Heart right ventricle (tissue), 16 donors: ENCODE measurements at regions of chr16 and their contacts with region 1.

Region 1: GRCh38 chr16:89507834-89508590 is at the start of gene SPG7:
- DNase-seq: peak; percentile 84 to 90
- ATAC-seq: peak; percentile 86 to 95 (median 91)
- H3K4me3 ChIP-seq: peak within 1 kb of the TSS; percentile 51 to 97 (median 88)
- H3K27ac ChIP-seq: peak within 1 kb of the TSS; percentile 91 to 99 (median 98)
- H3K4me1 ChIP-seq: peaks cover 20 to 53% (median 45%) of the 10 kb centered on the region in 9 donors
- H3K27me3 ChIP-seq: no peaks in the 10 kb centered on the region
- CTCF ChIP-seq: peak in 2 of 9 donors; percentile 16
- total RNA-seq, gene SPG7: 85.4 to 145 (median 101) TPM

Region 2: GRCh38 chr16:89330177-89330856 is 177.7 kb before region 1 on chr16:
- intact Hi-C with region 1: loop called in 9 of 10 experiments (anchors 1 to 10 kb)
- DNase-seq: no peak
- ATAC-seq: peak in 6 of 8 donors; percentile 20 to 50 (median 34)
- H3K4me3 ChIP-seq: peak overlapping the region in 4 of 10 donors; percentile 7 to 18 (median 10)
- H3K27ac ChIP-seq: peak overlapping the region in 9 of 10 donors; percentile 13 to 78 (median 42)
- H3K4me1 ChIP-seq: peaks cover 32 to 93% (median 71%) of the 10 kb centered on the region in 9 donors
- H3K27me3 ChIP-seq: no peaks in the 10 kb centered on the region
- CTCF ChIP-seq: no peak

Region 3: DNA sequence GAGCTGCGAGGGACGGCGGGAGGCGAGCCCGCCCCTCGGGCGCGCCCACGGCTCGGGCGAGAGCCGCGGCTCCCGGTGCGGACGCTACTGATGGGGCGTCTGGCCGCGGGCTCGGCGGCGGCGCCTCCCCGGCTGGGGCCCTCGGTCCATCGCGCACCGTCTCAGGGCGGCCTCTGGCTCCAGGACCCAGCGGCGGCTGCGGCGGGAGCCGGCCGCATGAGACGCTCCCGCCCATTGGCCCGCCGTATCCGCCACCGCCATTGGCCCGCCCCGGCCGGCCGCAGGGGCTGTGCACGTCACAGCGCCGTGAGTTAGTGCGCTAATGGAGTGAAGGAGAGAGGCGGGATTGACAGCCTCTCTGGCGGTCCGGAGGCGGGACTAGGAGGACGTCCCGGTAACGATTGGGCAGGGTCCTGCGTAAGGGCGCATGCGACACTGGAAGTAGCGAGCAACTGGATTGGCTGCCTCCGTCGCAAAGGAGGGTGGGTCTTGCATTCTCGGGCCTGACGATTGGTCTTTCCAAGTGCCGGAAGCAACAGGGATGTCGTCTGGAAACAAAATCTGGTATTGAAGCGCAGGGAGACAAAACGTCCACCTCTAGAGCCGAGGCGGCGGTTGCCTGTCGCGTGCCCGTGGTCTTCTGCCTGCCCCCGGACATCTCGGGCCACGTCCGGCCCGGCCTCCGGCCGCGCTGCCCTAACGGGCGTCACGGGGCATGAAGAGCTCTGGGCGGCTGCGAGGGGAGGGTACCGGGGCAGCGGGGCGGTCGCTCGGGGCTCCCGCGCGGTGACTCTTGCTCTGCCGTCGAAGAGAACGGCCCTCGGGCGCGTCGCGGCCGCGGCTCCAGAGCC is 17.4 kb before region 1 on chr16 and contains the start of gene ANKRD11:
- intact Hi-C with region 1: loop called in 1 of 10 experiments (anchors 1 kb)
- DNase-seq: peak; percentile 98 to 99
- ATAC-seq: peak; percentile 97 to 99 (median 98)
- H3K4me3 ChIP-seq: peak within 1 kb of the TSS; percentile 72 to 98 (median 86)
- H3K27ac ChIP-seq: peak within 1 kb of the TSS; percentile 93 to 98 (median 94)
- H3K4me1 ChIP-seq: peaks cover 18 to 62% (median 47%) of the 10 kb centered on the region in 9 donors
- H3K27me3 ChIP-seq: no peaks in the 10 kb centered on the region
- CTCF ChIP-seq: no peak
- total RNA-seq, gene ANKRD11: 55.9 to 93.6 (median 67.4) TPM

Region 4: DNA sequence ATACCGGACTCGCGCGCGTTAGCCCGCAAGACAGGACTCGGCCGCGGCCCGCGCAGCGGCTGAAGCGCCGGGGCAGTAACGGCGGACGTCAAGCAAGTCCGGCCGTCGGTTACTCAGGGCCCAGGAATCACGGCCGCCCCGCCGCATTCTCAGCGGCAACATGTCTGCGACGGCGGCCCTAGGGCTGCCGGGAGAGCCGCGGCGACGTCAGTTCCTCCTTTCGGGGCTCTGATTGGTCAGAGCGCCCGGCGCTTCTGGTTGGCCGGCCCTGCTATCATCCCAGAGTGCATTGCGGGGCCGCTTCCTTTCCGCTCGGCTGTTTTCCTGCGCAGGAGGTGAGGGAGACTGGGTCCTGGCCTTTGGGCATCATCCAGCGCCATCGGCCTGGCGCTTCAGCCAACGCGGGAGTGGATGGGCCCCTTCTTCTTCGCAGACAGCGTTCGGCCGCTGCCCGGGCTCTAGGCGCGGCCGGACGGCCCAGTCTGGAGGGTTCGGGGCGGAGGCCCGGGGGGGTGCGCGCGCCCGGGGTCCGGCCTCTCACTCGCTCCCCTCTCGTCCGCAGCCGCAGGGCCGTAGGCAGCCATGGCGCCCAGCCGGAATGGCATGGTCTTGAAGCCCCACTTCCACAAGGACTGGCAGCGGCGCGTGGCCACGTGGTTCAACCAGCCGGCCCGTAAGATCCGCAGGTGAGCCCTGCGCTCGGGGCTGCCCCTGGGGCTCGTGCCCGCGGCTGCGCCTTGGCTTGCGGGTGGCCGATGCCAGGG is 52.5 kb after region 1 on chr16 and contains the start of gene RPL13:
- intact Hi-C with region 1: loop called in 1 of 10 experiments (anchors 10 kb)
- DNase-seq: peak; percentile 94 to 95
- ATAC-seq: peak; percentile 93 to 98 (median 97)
- H3K4me3 ChIP-seq: peak within 1 kb of the TSS; percentile 70 to 98 (median 84)
- H3K27ac ChIP-seq: peak within 1 kb of the TSS; percentile 85 to 99 (median 96)
- H3K4me1 ChIP-seq: peaks cover 21 to 68% (median 52%) of the 10 kb centered on the region in 9 donors
- H3K27me3 ChIP-seq: no peaks in the 10 kb centered on the region
- CTCF ChIP-seq: peak in 1 of 9 donors; percentile 18
- total RNA-seq, gene RPL13: 786 to 1,426 (median 935) TPM